Heart right ventricle (tissue), 16 donors: ENCODE measurements at regions of chr2 and their contacts with region 1.

Region 1: DNA sequence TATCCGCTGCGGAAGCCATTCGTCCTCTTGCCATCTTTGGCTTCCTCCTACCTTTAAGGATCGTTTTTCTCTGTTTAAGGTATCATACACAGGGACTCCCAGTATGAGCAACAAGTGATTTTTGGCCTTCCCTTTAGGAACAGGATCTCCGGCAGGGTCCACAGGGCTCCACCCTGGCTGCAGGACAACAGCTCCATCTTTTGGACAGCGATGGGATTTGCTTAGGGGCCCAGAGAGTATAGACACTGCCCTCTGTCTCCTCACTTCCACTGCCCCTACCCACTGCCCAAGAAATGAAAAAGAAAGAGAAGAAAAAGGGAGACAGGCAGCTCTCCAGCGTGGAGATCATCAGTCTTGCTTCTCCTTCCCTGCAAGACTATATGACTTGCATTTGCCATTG is 224.5 kb downstream of the UXS1 start:
- DNase-seq: no peak
- ATAC-seq: no peak
- H3K4me3 ChIP-seq: no peak overlapping the region
- H3K27ac ChIP-seq: no peak overlapping the region
- H3K4me1 ChIP-seq: no peaks in the 10 kb centered on the region
- H3K27me3 ChIP-seq: no peaks in the 10 kb centered on the region
- CTCF ChIP-seq: peak in 3 of 9 donors; percentile 11 to 33 (median 17)

Region 2: GRCh38 chr2:105582952-105583660 is 386.4 kb before region 1 on chr2:
- intact Hi-C with region 1: loop called in 2 of 10 experiments (anchors 10 kb)
- DNase-seq: no peak
- ATAC-seq: no peak
- H3K4me3 ChIP-seq: no peak overlapping the region
- H3K27ac ChIP-seq: no peak overlapping the region
- H3K4me1 ChIP-seq: no peaks in the 10 kb centered on the region
- H3K27me3 ChIP-seq: no peaks in the 10 kb centered on the region
- CTCF ChIP-seq: no peak

Region 3: DNA sequence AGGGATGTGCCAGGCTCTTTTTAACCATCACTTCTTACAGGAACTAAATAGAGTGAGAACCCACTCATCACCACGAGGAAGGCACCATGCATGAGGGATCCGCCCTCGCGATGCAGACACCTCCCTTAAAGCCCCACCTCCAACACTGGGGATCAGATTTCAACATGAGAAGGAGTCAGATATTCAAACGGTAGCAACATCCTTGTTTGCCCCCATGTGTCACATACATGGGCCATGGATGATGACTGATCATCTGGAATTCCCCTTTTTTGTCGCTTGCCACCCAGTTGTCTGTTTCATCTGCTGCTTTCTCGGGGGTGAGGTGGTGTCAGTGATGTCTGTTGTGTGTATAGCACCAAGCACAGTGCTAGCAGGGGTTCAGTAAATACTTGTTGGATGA is 167.0 kb before region 1 on chr2:
- intact Hi-C with region 1: no loop called
- DNase-seq: no peak
- ATAC-seq: no peak
- H3K4me3 ChIP-seq: no peak overlapping the region
- H3K27ac ChIP-seq: peak overlapping the region in 1 of 10 donors; percentile 11
- H3K4me1 ChIP-seq: peaks cover 6 to 83% (median 75%) of the 10 kb centered on the region in 9 donors
- H3K27me3 ChIP-seq: no peaks in the 10 kb centered on the region
- CTCF ChIP-seq: no peak